MCF 10A (cell line): ENCODE measurements at regions of chr5 and their contacts with region 1.

Region 1: DNA sequence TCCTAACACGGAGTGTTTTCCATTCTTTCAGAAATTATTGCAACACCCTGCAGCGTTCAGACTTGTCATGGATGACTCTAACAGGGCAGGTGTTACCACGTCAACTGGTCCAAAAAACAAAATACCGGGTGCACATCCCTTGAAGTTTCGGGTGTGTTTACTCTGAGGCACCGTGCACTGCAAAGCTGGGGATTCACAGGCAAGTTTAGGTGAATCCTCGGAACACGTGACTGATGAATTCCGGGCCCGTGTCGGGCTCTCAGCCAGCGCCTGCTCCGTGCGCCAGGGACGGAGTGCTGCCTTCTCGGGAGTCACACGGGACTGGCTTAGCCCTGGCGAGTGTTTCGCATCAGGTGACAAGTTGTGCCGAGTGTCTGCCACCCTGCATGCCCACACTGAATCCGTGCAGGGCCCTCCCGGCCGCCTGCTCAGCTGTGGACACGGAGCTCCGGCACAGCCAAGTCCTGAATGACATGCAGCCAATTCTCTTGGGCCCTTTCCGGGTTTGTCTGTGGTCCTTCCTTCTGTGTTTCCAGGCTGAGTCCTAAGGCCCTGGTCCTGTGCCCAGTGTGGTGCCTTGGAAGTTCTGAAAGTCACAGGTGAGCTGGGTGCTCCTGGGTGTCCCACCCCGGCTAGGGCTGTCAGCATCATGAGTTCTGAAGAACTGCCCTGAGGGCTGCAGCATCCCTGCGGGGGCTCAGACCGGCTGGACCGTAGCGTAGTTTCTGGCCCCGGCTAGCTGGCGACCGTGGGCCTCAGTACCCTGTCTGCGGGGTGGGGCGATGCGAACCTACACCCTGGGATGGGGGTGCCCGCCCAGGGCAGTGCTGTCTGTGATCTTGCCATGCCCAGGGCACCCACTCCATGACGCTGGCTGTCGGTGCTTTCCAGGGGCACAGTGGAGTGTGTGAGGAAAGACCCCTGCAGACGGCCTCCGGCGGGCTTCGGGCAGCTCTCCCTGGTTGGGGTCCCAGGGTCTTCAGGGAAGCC is 66.2 kb upstream of the IRX4 start:
- DNase-seq: peak; percentile 93
- H3K4me3 Mint-ChIP-seq: peak overlapping the region; percentile 67
- H3K27ac Mint-ChIP-seq: peak overlapping the region; percentile 96
- H3K4me1 Mint-ChIP-seq: peaks cover 28% of the 10 kb centered on the region
- H3K27me3 Mint-ChIP-seq: no peaks in the 10 kb centered on the region
- CTCF ChIP-seq: no peak

Region 2: DNA sequence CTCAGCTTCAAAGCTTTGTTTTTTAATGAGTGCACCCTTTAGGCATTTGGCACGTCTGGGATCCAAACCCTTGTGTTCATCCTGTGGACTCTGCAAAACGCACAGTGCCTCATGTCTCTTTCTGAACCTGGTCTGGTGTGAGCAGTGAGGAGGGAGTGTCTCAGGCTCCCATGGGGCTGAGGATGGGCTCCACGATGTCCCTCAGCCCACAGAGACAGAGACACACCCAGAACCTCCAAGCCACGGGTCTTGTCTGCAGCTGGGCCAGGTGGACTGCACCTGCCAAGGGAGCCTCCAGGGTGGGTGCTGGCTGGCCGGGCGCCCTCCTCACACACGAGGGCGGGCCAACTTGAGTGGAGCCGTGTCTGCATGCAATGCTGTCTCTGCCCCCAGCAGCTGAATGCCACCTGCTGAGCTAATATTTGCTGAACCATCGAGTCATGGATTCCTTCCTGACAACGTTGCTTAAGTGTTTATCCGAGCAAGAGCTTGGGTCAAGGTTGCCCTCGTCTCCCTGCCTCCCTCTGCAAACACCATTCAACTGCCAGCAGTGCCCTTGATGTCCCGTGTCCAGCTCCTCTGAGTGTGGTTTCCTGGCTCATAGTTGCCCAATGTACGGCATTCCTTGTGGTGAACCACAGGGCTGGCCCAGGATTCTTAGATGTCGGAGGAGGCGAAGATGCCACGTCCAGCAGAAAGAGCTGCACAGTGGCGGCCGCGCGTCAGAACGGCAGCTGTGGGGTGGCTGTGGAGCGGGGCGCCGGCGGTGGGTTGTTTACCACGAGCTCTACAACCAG is 393.7 kb before region 1 on chr5:
- CTCF ChIA-PET with region 1: no interaction called
- POLR2A ChIA-PET with region 1: no interaction called
- intact Hi-C with region 1: no loop called
- DNase-seq: peak; percentile 97
- H3K4me3 Mint-ChIP-seq: peak overlapping the region; percentile 12
- H3K27ac Mint-ChIP-seq: no peak overlapping the region
- H3K4me1 Mint-ChIP-seq: peaks cover 13% of the 10 kb centered on the region
- H3K27me3 Mint-ChIP-seq: peaks cover 67% of the 10 kb centered on the region
- CTCF ChIP-seq: no peak

Region 3: DNA sequence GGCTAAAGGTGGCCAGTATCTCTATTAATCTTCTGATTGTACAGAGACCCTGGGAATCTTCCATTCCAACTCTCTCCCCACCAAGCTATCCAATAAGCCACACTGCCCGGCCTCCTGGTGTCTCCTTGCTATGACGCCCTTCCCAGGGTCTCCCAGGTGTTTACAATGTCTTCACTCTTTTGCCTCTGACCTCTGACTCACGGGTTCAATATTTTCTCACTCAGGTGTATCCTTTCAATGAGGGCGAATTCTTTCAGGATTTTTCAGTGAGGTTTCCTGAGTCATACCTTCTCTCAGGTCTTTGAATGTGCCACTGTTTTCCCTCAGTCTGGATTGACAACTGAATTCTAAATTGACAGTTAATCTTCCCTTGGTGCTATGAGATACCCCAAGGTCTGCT is 12.5 kb before region 1 on chr5:
- CTCF ChIA-PET with region 1: interaction called, 5 read pairs
- POLR2A ChIA-PET with region 1: interaction called, 58 read pairs
- intact Hi-C with region 1: no loop called
- DNase-seq: peak; percentile 83
- H3K4me3 Mint-ChIP-seq: peak overlapping the region; percentile 17
- H3K27ac Mint-ChIP-seq: peak overlapping the region; percentile 90
- H3K4me1 Mint-ChIP-seq: peaks cover 20% of the 10 kb centered on the region
- H3K27me3 Mint-ChIP-seq: no peaks in the 10 kb centered on the region
- CTCF ChIP-seq: no peak

Region 4: DNA sequence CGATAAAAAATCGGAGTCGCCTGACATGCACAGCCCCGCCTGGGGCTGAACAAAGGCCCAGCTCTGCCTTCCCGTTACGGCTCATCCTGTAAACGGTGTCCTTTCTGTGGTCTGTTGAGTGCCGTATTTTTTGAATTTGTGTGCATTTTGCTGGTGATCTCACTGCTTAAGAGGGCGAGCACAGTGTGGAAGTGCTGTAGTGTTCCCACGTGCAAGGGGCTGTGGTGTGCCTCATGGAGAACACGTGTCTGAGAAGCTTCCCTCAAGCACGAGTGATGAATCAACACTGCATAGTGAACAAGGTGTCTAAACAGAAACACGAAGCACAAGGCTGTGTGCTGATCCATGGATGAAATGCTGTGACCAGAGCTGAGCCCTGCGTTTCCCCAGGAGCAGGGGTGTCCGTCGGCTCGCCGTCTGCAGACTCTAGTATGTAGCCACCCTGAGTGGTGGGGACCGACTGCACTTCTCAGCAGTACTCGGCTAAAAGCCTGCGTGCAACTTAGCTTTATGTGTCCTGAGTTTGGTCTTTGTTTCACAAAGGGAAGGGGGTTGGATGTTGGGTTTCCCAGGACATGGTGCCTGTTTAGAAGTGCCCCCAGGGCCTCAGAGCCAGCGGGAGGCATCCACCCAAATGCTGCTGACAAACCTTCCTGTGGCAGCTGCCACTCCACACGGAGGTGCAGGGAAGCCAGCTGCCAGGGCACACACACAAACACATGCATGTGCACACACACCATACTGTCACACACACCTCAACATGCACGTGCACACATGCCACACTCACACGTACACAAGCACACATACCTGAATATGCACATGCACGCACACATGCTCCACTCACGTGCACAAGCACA is 11.0 kb after region 1 on chr5:
- CTCF ChIA-PET with region 1: interaction called, 4 read pairs
- POLR2A ChIA-PET with region 1: interaction called, 16 read pairs
- intact Hi-C with region 1: loop called (anchors 1 kb)
- DNase-seq: no peak
- H3K4me3 Mint-ChIP-seq: no peak overlapping the region
- H3K27ac Mint-ChIP-seq: no peak overlapping the region
- H3K4me1 Mint-ChIP-seq: peaks cover 19% of the 10 kb centered on the region
- H3K27me3 Mint-ChIP-seq: no peaks in the 10 kb centered on the region
- CTCF ChIP-seq: no peak

Region 5: GRCh38 chr5:1965925-1966324 is 17.0 kb after region 1 on chr5:
- CTCF ChIA-PET with region 1: interaction called, 6 read pairs
- POLR2A ChIA-PET with region 1: interaction called, 13 read pairs
- intact Hi-C with region 1: loop called (anchors 1 kb)
- DNase-seq: no peak
- H3K4me3 Mint-ChIP-seq: no peak overlapping the region
- H3K27ac Mint-ChIP-seq: no peak overlapping the region
- H3K4me1 Mint-ChIP-seq: peaks cover 19% of the 10 kb centered on the region
- H3K27me3 Mint-ChIP-seq: no peaks in the 10 kb centered on the region
- CTCF ChIP-seq: no peak

Region 6: DNA sequence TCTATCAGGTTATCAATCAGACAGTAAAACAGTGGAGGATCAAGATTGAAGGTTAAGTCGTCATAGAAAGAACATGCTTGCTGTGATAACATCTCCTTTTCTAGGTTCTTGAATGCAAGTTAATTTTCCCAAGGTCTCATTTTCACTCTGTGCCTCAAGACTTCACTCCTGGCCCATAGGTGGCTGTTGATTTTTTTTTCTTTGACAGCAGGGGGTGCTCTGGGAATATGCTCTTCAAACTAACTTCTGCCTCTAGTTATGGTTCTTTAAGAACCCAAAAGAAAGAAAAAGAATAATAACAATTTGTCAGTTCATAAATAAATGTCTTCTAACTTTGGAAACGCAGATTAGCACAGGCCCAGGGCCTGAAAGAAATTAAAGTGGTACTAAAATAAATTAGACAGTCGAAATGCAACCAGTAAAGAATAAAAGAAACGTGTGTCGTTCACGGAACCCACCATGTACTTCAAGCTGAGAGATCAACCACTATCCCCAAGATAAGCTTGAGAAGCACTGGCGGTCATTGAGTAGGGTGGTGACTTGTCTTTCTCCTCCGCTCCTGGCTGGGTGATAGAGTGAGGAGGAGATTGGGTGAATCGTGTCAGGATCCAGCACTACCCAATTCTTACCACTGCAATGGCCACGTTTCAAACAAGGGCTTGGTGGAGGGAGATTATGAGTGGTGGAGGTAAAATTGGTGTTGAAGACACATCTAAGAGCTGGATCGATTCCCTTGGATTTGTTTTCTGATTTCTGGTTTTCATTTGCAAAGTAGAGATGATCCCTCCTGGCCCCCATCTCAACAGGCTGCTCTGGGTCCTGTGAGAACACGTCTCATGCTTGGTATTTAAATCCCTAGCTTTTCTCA is 27.2 kb after region 1 on chr5:
- CTCF ChIA-PET with region 1: interaction called, 5 read pairs
- POLR2A ChIA-PET with region 1: interaction called, 79 read pairs
- intact Hi-C with region 1: no loop called
- DNase-seq: peak; percentile 51
- H3K4me3 Mint-ChIP-seq: no peak overlapping the region
- H3K27ac Mint-ChIP-seq: no peak overlapping the region
- H3K4me1 Mint-ChIP-seq: peaks cover 33% of the 10 kb centered on the region
- H3K27me3 Mint-ChIP-seq: no peaks in the 10 kb centered on the region
- CTCF ChIP-seq: peak; percentile 11

Region 7: DNA sequence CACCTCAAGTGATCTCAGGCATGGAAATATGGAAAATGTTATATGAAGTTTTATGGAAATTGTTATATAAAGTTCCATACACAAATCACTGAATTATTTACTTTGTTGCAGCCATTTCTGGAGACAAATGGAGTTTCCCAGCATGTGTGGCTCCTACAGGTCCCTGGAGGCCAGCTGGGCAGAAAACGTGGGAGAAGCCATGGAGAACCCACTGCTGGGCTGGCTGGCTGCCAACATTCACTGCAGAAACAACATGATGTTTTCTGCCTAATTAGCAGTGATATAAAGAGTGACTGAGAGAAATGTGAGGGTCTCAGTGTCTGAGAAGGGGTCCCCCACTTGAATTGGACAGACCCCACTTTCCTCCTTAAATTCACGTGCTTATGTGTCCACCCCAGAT is 1011.3 kb after region 1 on chr5:
- CTCF ChIA-PET with region 1: no interaction called
- POLR2A ChIA-PET with region 1: no interaction called
- intact Hi-C with region 1: no loop called
- DNase-seq: no peak
- H3K4me3 Mint-ChIP-seq: no peak overlapping the region
- H3K27ac Mint-ChIP-seq: no peak overlapping the region
- H3K4me1 Mint-ChIP-seq: no peaks in the 10 kb centered on the region
- H3K27me3 Mint-ChIP-seq: no peaks in the 10 kb centered on the region
- CTCF ChIP-seq: no peak